ENCODE measurements at regions of chr2 and their contacts with region 1.

Region 1: GRCh38 chr2:227471924-227472264 is at the start of gene AGFG1:
- DNase-seq: peak; percentile 71 to 90 (median 81)
- ATAC-seq: peak; percentile 97
- H3K4me3 ChIP-seq: peak within 1 kb of the TSS; percentile 55
- H3K4me3 Mint-ChIP-seq: peak within 1 kb of the TSS; percentile 86 to 96 (median 93)
- H3K27ac ChIP-seq: peak within 1 kb of the TSS; percentile 80
- H3K27ac Mint-ChIP-seq: peak within 1 kb of the TSS; percentile 77 to 94 (median 86)
- H3K4me1 ChIP-seq: peaks cover 30 to 40% of the 10 kb centered on the region in 2 donors
- H3K4me1 Mint-ChIP-seq: peaks cover 33 to 65% (median 60%) of the 10 kb centered on the region in 7 donors
- H3K27me3 ChIP-seq: no peaks in the 10 kb centered on the region
- H3K27me3 Mint-ChIP-seq: no peaks in the 10 kb centered on the region
- total RNA-seq, gene AGFG1: 52.8 to 84.5 (median 58.2) TPM

Region 2: DNA sequence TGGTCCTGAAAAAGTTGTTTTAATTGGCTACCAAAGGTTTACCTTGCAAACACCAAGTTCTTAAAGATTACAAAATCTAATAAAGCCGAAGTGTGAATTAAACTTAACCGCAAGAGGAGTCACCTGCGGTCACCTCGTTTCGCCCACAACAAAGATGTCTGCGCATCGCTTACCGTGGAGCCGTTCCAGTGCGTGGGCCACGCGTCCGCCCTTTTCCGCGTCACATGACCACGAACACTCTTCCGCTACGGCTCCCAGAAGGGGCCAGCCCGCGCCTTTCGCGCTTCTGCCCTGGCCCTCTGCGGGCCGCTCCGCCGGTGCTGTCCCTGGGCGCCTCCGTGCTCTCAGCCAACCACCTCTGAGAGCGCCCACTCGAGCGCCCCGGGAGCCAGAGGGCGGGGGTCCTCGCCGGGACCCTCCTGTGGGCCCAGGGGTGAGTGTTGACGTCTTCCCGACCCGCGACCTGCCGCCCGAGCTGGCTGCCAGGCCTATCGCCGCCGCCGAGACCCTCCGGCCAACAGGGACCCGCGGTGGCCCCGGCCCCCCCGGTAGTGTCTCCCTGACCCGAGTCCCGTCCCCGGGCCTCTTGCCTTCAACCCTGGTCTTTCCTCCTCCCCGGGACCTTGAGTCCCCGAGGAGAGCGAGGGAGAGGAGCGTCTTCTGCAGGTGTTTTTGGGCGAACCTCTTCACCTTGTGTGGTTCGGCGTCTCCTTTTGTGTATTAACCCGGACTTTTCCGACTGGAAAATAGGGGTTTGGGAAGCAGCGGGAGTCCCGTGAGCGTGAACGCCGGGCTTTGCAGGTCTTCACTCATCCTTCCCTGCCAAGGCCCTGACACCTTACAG is 146.7 kb before region 1 on chr2 and contains the start of gene MFF:
- CTCF ChIA-PET with region 1: no interaction called
- POLR2A ChIA-PET with region 1: interaction called, 3 read pairs
- intact Hi-C with region 1: loop called (anchors 1 kb)
- DNase-seq: peak; percentile 82 to 93 (median 93)
- ATAC-seq: peak; percentile 99
- H3K4me3 ChIP-seq: peak within 1 kb of the TSS; percentile 76
- H3K4me3 Mint-ChIP-seq: peak within 1 kb of the TSS; percentile 91 to 97 (median 96)
- H3K27ac ChIP-seq: peak within 1 kb of the TSS; percentile 92
- H3K27ac Mint-ChIP-seq: peak within 1 kb of the TSS; percentile 83 to 97 (median 95)
- H3K4me1 ChIP-seq: peaks cover 4 to 24% of the 10 kb centered on the region in 2 donors
- H3K4me1 Mint-ChIP-seq: peaks cover 8 to 59% (median 46%) of the 10 kb centered on the region in 7 donors
- H3K27me3 ChIP-seq: no peaks in the 10 kb centered on the region
- H3K27me3 Mint-ChIP-seq: peaks cover 0 to 13% (median 0%) of the 10 kb centered on the region in 5 donors
- total RNA-seq, gene MFF: 51.7 to 64.7 (median 61.8) TPM

Region 3: DNA sequence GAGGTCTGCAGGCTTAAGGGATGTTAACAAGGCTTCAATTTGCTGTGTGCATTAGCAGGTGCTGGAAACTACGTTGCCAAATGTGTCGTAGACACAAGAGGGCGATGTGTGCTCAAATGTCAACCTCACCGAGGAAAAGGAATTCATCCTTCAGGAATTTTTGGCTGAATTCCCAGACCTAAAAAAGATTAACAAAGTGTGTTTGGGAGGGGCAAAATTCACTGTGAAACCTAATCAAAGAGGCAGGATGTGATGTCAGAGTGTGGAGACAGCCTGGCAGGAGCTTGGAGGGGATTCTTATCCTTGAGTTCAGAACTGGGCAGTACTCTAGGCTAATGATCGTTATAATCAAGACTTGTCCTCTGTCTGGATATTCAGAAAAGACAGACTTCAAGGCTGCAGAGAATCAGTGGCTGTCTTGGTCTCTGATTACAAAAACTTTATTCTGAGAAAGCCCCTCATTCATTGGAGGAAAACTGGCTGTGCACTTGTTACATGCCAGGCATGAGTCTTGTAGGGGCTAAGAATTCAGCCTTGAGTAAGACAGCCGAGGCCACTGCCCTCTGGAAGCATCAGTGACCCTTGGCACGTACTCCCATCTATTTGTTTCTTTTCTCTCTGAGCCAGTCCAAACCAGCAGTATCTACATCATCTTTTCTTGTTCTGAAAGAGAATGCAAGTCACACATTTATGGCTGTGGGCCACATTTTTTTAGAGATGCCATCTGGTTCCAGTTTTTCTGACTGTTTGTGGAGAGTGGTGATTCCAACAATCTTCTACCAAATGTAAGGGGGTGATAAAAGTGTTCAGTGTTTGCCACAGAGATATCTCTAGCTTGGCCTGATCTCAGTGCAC is 65.5 kb before region 1 on chr2:
- CTCF ChIA-PET with region 1: no interaction called
- POLR2A ChIA-PET with region 1: no interaction called
- intact Hi-C with region 1: loop called in 1 of 2 experiments (anchors 2 kb)
- DNase-seq: peak in 1 of 9 donors; percentile 5
- ATAC-seq: no peak
- H3K4me3 ChIP-seq: no peak overlapping the region
- H3K4me3 Mint-ChIP-seq: peak overlapping the region in 4 of 10 donors; percentile 5 to 41 (median 20)
- H3K27ac ChIP-seq: no peak overlapping the region
- H3K27ac Mint-ChIP-seq: peak overlapping the region in 5 of 9 donors; percentile 14 to 78 (median 56)
- H3K4me1 ChIP-seq: peaks cover 0 to 9% of the 10 kb centered on the region in 2 donors
- H3K4me1 Mint-ChIP-seq: peaks cover 10 to 36% (median 28%) of the 10 kb centered on the region in 7 donors
- H3K27me3 ChIP-seq: no peaks in the 10 kb centered on the region
- H3K27me3 Mint-ChIP-seq: no peaks in the 10 kb centered on the region

Region 4: GRCh38 chr2:227460070-227460485 is 11.8 kb before region 1 on chr2:
- CTCF ChIA-PET with region 1: interaction called, 5 read pairs
- POLR2A ChIA-PET with region 1: interaction called, 5 read pairs
- intact Hi-C with region 1: loop called (anchors 1 kb)
- DNase-seq: peak in 8 of 9 donors; percentile 16 to 61 (median 34)
- ATAC-seq: peak; percentile 78
- H3K4me3 ChIP-seq: no peak overlapping the region
- H3K4me3 Mint-ChIP-seq: peak overlapping the region; percentile 6 to 74 (median 58)
- H3K27ac ChIP-seq: no peak overlapping the region
- H3K27ac Mint-ChIP-seq: peak overlapping the region in 6 of 9 donors; percentile 5 to 76 (median 37)
- H3K4me1 ChIP-seq: peaks cover 31 to 52% of the 10 kb centered on the region in 2 donors
- H3K4me1 Mint-ChIP-seq: peaks cover 36 to 68% (median 64%) of the 10 kb centered on the region in 7 donors
- H3K27me3 ChIP-seq: no peaks in the 10 kb centered on the region
- H3K27me3 Mint-ChIP-seq: no peaks in the 10 kb centered on the region

Region 5: GRCh38 chr2:227491386-227491785 is 19.5 kb after region 1 on chr2:
- CTCF ChIA-PET with region 1: no interaction called
- POLR2A ChIA-PET with region 1: no interaction called
- intact Hi-C with region 1: loop called in 1 of 2 experiments (anchors 2 kb)
- DNase-seq: no peak
- ATAC-seq: no peak
- H3K4me3 ChIP-seq: no peak overlapping the region
- H3K4me3 Mint-ChIP-seq: no peak overlapping the region
- H3K27ac ChIP-seq: no peak overlapping the region
- H3K27ac Mint-ChIP-seq: no peak overlapping the region
- H3K4me1 ChIP-seq: no peaks in the 10 kb centered on the region
- H3K4me1 Mint-ChIP-seq: peaks cover 15 to 71% (median 58%) of the 10 kb centered on the region in 7 donors
- H3K27me3 ChIP-seq: no peaks in the 10 kb centered on the region
- H3K27me3 Mint-ChIP-seq: no peaks in the 10 kb centered on the region

Region 6: GRCh38 chr2:227884511-227884947 is 412.6 kb after region 1 on chr2:
- CTCF ChIA-PET with region 1: no interaction called
- POLR2A ChIA-PET with region 1: no interaction called
- intact Hi-C with region 1: loop called in 1 of 2 experiments (anchors 2 kb)
- DNase-seq: peak in 5 of 9 donors; percentile 12 to 62 (median 16)
- ATAC-seq: peak; percentile 74
- H3K4me3 ChIP-seq: no peak overlapping the region
- H3K4me3 Mint-ChIP-seq: no peak overlapping the region
- H3K27ac ChIP-seq: no peak overlapping the region
- H3K27ac Mint-ChIP-seq: no peak overlapping the region
- H3K4me1 ChIP-seq: no peaks in the 10 kb centered on the region
- H3K4me1 Mint-ChIP-seq: peaks cover 0 to 7% (median 0%) of the 10 kb centered on the region in 7 donors
- H3K27me3 ChIP-seq: no peaks in the 10 kb centered on the region
- H3K27me3 Mint-ChIP-seq: peaks cover 0 to 17% (median 6%) of the 10 kb centered on the region in 5 donors

Measured in naive thymus-derived CD4-positive, alpha-beta T cell (primary cell).